Dendritic cell treated with granulocyte-macrophage colony-stimulating factor and Interleukin-4, amounts not matched to agents 40 ng/mL and 50 ng/mL, for 4 days (primary cell): ENCODE measurements at regions of chr9 and their contacts with region 1.

Region 1: DNA sequence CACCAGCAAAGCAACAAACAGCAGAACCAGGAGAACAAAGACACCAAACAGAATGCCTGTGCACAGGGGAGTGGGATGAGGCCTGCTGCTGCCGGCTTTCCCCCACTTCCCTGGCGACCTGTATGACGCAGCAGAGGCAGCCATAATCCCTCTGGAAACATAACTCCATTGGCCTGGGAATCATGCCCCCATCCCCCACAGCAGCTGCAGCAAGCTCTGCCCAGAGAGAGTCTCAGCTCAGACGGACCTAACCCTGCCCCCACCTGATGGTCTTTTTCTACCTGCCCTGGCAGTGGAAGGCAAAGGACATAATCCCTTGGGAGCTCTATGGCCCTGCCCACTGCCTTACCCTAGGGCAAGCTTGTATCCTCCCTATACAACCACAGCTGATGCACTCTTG is 81.8 kb upstream of the FANCC start:
- H3K4me3 Mint-ChIP-seq: no peak overlapping the region
- H3K27ac Mint-ChIP-seq: no peak overlapping the region
- H3K4me1 Mint-ChIP-seq: no peaks in the 10 kb centered on the region
- H3K27me3 Mint-ChIP-seq: peaks cover 22% of the 10 kb centered on the region

Region 2: GRCh38 chr9:95336281-95336680 is 63.0 kb before region 1 on chr9:
- intact Hi-C with region 1: loop called (anchors 10 kb)
- H3K4me3 Mint-ChIP-seq: no peak overlapping the region
- H3K27ac Mint-ChIP-seq: no peak overlapping the region
- H3K4me1 Mint-ChIP-seq: no peaks in the 10 kb centered on the region
- H3K27me3 Mint-ChIP-seq: peaks cover 18% of the 10 kb centered on the region

Region 3: GRCh38 chr9:95434116-95435073 is 35.1 kb after region 1 on chr9:
- intact Hi-C with region 1: no loop called
- H3K4me3 Mint-ChIP-seq: no peak overlapping the region
- H3K27ac Mint-ChIP-seq: no peak overlapping the region
- H3K4me1 Mint-ChIP-seq: peaks cover 13% of the 10 kb centered on the region
- H3K27me3 Mint-ChIP-seq: peaks cover 18% of the 10 kb centered on the region